ENCODE measurements at regions of chr1 and their contacts with region 1.

Region 1: GRCh38 chr1:43067977-43068751 is 103.9 kb downstream of the EBNA1BP2 start:
- DNase-seq: peak; percentile 20
- H3K4me3 ChIP-seq: peak overlapping the region; percentile 53
- H3K27ac ChIP-seq: no peak overlapping the region
- H3K4me1 ChIP-seq: no peaks in the 10 kb centered on the region
- H3K27me3 ChIP-seq: no peaks in the 10 kb centered on the region

Region 2: GRCh38 chr1:42730988-42731387 is 337.2 kb before region 1 on chr1:
- in situ Hi-C with region 1: no loop called
- DNase-seq: peak; percentile 24
- H3K4me3 ChIP-seq: no peak overlapping the region
- H3K27ac ChIP-seq: no peak overlapping the region
- H3K4me1 ChIP-seq: no peaks in the 10 kb centered on the region
- H3K27me3 ChIP-seq: no peaks in the 10 kb centered on the region

Region 3: DNA sequence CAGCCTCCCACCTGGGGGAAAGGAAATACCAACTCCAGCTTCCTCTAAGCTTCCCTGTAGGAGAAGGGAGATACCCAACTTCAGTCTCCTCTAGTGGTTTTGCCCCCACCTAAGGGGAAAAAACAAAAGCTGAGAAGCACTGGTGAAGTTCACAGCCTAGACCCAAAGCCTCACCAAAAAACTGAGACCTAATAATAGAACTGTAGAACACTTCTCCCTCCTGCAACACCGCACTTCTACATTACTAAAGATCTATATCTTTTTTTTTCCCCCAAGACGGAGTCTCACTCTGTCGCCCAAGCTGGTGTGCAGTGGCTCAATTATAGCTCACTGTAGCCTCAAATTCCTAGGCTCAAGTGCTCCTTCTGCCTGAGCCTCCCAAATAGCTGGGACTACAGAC is 152.7 kb before region 1 on chr1:
- in situ Hi-C with region 1: loop called (anchors 5 kb)
- DNase-seq: no peak
- H3K4me3 ChIP-seq: no peak overlapping the region
- H3K27ac ChIP-seq: no peak overlapping the region
- H3K4me1 ChIP-seq: no peaks in the 10 kb centered on the region
- H3K27me3 ChIP-seq: no peaks in the 10 kb centered on the region

Region 4: GRCh38 chr1:42931108-42931539 is 137.0 kb before region 1 on chr1:
- in situ Hi-C with region 1: no loop called
- DNase-seq: peak; percentile 50
- H3K4me3 ChIP-seq: no peak overlapping the region
- H3K27ac ChIP-seq: no peak overlapping the region
- H3K4me1 ChIP-seq: peaks cover 7% of the 10 kb centered on the region
- H3K27me3 ChIP-seq: no peaks in the 10 kb centered on the region